B cell (primary cell): ENCODE measurements at regions of chr12 and their contacts with region 1.

Region 1: GRCh38 chr12:71610031-71610795 is 53.4 kb downstream of the ZFC3H1 start:
- DNase-seq: peak; percentile 50
- ATAC-seq: peak; percentile 47
- H3K4me3 ChIP-seq: no peak overlapping the region
- H3K4me3 Mint-ChIP-seq: peak overlapping the region; percentile 32
- H3K27ac ChIP-seq: peak overlapping the region; percentile 47 to 76
- H3K27ac Mint-ChIP-seq: peak overlapping the region; percentile 78
- H3K4me1 ChIP-seq: peaks cover 3 to 8% of the 10 kb centered on the region in 2 donors
- H3K4me1 Mint-ChIP-seq: peaks cover 6% of the 10 kb centered on the region
- H3K27me3 ChIP-seq: no peaks in the 10 kb centered on the region
- H3K27me3 Mint-ChIP-seq: no peaks in the 10 kb centered on the region
- CTCF ChIP-seq: no peak

Region 2: GRCh38 chr12:70535896-70536374 is 1074.3 kb before region 1 on chr12:
- CTCF ChIA-PET with region 1: no interaction called
- POLR2A ChIA-PET with region 1: no interaction called
- intact Hi-C with region 1: no loop called
- DNase-seq: no peak
- ATAC-seq: no peak
- H3K4me3 ChIP-seq: no peak overlapping the region
- H3K4me3 Mint-ChIP-seq: no peak overlapping the region
- H3K27ac ChIP-seq: no peak overlapping the region
- H3K27ac Mint-ChIP-seq: no peak overlapping the region
- H3K4me1 ChIP-seq: no peaks in the 10 kb centered on the region
- H3K4me1 Mint-ChIP-seq: no peaks in the 10 kb centered on the region
- H3K27me3 ChIP-seq: no peaks in the 10 kb centered on the region
- H3K27me3 Mint-ChIP-seq: no peaks in the 10 kb centered on the region
- CTCF ChIP-seq: no peak

Region 3: GRCh38 chr12:71303199-71303598 is 307.0 kb before region 1 on chr12:
- CTCF ChIA-PET with region 1: no interaction called
- POLR2A ChIA-PET with region 1: no interaction called
- intact Hi-C with region 1: no loop called
- DNase-seq: no peak
- ATAC-seq: no peak
- H3K4me3 ChIP-seq: no peak overlapping the region
- H3K4me3 Mint-ChIP-seq: no peak overlapping the region
- H3K27ac ChIP-seq: no peak overlapping the region
- H3K27ac Mint-ChIP-seq: no peak overlapping the region
- H3K4me1 ChIP-seq: no peaks in the 10 kb centered on the region
- H3K4me1 Mint-ChIP-seq: no peaks in the 10 kb centered on the region
- H3K27me3 ChIP-seq: no peaks in the 10 kb centered on the region
- H3K27me3 Mint-ChIP-seq: peaks cover 4% of the 10 kb centered on the region
- CTCF ChIP-seq: no peak

Region 4: DNA sequence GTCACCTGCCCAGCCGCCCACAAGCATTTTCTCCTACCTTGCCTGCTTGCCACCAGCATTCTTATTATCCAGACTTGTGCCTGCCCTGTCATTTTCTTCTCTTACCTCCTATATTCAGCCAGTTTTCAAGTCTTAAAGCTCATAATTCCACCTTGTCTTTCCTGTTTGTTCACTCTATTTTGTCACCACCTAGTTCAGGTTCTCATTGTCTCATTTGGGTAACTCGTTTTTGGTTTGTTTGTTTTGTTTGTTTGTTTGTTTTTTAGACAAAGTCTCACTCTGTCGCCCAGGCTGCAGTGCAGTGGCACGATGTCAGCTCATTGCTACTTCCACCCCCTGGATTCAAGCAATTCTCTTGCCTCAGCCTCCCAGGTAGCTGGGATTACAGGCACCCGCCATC is 98.5 kb before region 1 on chr12:
- CTCF ChIA-PET with region 1: no interaction called
- POLR2A ChIA-PET with region 1: no interaction called
- intact Hi-C with region 1: no loop called
- DNase-seq: no peak
- ATAC-seq: no peak
- H3K4me3 ChIP-seq: no peak overlapping the region
- H3K4me3 Mint-ChIP-seq: no peak overlapping the region
- H3K27ac ChIP-seq: no peak overlapping the region
- H3K27ac Mint-ChIP-seq: no peak overlapping the region
- H3K4me1 ChIP-seq: no peaks in the 10 kb centered on the region
- H3K4me1 Mint-ChIP-seq: no peaks in the 10 kb centered on the region
- H3K27me3 ChIP-seq: no peaks in the 10 kb centered on the region
- H3K27me3 Mint-ChIP-seq: peaks cover 21% of the 10 kb centered on the region
- CTCF ChIP-seq: no peak

Region 5: DNA sequence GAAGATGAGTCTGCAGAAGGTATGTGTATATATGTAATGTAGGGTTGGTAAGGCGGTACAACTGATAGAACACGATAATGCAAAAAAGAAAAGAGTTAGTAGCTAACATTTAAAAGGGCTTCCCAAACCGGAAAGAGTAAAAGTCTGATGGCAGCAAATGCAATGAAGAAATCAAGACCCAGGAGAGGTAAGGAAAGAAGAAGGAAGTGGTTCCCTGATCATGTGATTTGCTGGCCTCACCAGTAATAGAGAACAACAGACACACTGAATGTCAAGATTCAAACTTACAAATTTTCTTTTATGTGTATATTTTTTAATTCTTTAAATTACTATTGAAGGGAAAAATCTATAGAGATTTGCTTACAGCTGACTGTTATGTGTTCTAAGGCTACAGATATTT is 35.1 kb after region 1 on chr12:
- CTCF ChIA-PET with region 1: no interaction called
- POLR2A ChIA-PET with region 1: no interaction called
- intact Hi-C with region 1: loop called (anchors 5 kb)
- DNase-seq: peak; percentile 22
- ATAC-seq: no peak
- H3K4me3 ChIP-seq: no peak overlapping the region
- H3K4me3 Mint-ChIP-seq: no peak overlapping the region
- H3K27ac ChIP-seq: peak overlapping the region in 1 of 2 donors; percentile 56
- H3K27ac Mint-ChIP-seq: peak overlapping the region; percentile 34
- H3K4me1 ChIP-seq: peaks cover 0 to 3% of the 10 kb centered on the region in 2 donors
- H3K4me1 Mint-ChIP-seq: peaks cover 15% of the 10 kb centered on the region
- H3K27me3 ChIP-seq: no peaks in the 10 kb centered on the region
- H3K27me3 Mint-ChIP-seq: no peaks in the 10 kb centered on the region
- CTCF ChIP-seq: no peak

Region 6: GRCh38 chr12:71685312-71685906 is 75.2 kb after region 1 on chr12:
- CTCF ChIA-PET with region 1: no interaction called
- POLR2A ChIA-PET with region 1: no interaction called
- intact Hi-C with region 1: no loop called
- DNase-seq: no peak
- ATAC-seq: no peak
- H3K4me3 ChIP-seq: peak overlapping the region; percentile 70 to 99 (median 81)
- H3K4me3 Mint-ChIP-seq: peak overlapping the region; percentile 97
- H3K27ac ChIP-seq: peak overlapping the region; percentile 83 to 95
- H3K27ac Mint-ChIP-seq: peak overlapping the region; percentile 96
- H3K4me1 ChIP-seq: peaks cover 48% of the 10 kb centered on the region in 2 donors
- H3K4me1 Mint-ChIP-seq: peaks cover 43% of the 10 kb centered on the region
- H3K27me3 ChIP-seq: no peaks in the 10 kb centered on the region
- H3K27me3 Mint-ChIP-seq: no peaks in the 10 kb centered on the region
- CTCF ChIP-seq: no peak

Region 7: GRCh38 chr12:71896205-71896882 is 286.1 kb after region 1 on chr12:
- CTCF ChIA-PET with region 1: no interaction called
- POLR2A ChIA-PET with region 1: no interaction called
- intact Hi-C with region 1: loop called (anchors 10 kb)
- DNase-seq: no peak
- ATAC-seq: no peak
- H3K4me3 ChIP-seq: no peak overlapping the region
- H3K4me3 Mint-ChIP-seq: no peak overlapping the region
- H3K27ac ChIP-seq: no peak overlapping the region
- H3K27ac Mint-ChIP-seq: no peak overlapping the region
- H3K4me1 ChIP-seq: no peaks in the 10 kb centered on the region
- H3K4me1 Mint-ChIP-seq: peaks cover 2% of the 10 kb centered on the region
- H3K27me3 ChIP-seq: no peaks in the 10 kb centered on the region
- H3K27me3 Mint-ChIP-seq: no peaks in the 10 kb centered on the region
- CTCF ChIP-seq: no peak